ENCODE measurements at regions of chr19 and their contacts with region 1.

Region 1: DNA sequence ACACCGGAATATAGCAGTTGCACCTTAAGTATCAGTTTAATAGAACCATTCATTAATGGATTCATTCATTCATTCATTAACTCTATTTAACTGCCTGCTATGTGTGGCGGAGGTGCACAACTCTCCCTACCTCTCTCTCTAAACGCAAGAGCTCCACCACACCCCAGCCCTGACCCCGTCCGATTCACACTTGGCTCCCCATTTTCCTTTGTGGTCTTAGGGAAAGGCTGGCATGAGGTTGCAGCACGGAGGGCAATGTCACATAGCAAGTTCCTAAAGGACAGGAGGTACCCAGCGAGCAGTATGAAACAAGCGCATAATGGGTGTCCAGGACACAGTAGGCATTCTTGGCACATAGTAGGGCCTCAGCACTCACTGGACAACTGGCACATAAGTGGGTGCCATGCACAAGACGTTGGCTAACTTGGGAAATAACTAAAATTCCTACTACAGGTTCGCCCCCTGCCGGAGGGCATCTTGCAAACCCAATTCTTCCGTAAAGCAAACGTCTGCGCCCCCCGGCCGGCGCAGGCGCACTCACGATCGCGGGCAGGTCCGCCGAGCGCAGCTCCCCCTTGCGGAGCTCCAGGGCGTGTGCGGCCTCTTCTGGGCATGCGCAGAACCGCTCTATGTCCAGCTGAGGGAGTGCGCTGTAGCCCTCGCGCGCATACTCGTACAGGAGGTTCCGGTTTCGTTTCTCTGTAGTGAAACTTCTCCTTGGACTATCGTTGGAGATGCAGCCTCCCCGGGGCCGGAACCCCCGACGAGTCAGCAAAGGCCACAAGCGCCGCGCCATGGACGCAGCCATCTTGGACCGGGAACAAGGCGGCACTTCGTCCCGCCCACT is at the start of gene SARS2:
- DNase-seq: peak; percentile 88 to 95
- ATAC-seq: peak; percentile 80
- total RNA-seq, gene SARS2: 15.4 to 33.3 TPM

Region 2: DNA sequence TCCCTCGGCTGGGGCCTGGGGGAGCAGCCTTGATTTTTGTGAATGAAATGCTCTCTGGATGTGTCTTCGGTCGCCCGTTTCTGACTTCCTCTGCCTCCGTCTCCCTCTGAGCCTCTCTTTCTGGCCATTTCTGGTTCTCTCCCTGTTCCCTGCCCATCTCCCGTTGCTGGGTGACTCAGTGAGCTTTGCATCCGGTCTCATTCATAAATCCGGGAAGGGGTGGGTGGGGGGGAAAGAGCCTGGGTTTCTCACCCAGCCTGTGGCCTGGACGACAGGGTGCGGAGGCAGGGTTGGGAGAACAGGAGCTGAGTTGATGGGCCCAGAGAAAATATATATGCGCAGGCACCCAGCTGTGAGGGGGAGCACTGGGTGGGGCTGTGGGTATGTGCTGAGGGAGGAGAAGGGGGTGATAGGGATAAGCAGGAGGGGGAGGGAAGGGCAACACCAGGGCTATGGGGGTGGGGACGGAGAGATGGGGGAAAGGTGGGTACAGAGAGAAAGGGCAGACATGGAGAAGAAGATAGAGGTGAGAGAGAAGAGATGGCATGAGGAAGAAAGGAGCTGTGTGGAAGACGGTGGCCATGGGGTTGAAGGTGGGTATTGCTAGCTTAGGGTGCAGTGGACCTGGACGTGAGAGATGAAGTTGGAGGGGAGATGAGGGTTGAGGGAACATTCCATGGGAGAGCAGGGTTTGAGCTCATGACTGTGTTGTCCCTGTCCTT is 540.4 kb before region 1 on chr19:
- intact Hi-C with region 1: loop called in 1 of 2 experiments (anchors 10 kb)
- DNase-seq: no peak
- ATAC-seq: no peak